Aorta (tissue), 5 donors: ENCODE measurements at regions of chr18 and their contacts with region 1.

Region 1: GRCh38 chr18:55322178-55322735 is 265.7 kb downstream of the TCF4 start:
- DNase-seq: peak; percentile 91 to 92
- ATAC-seq: peak; percentile 89
- H3K4me3 ChIP-seq: peak overlapping the region; percentile 96 to 99
- H3K27ac ChIP-seq: peak overlapping the region; percentile 32 to 94
- H3K4me1 ChIP-seq: no peaks in the 10 kb centered on the region
- H3K27me3 ChIP-seq: no peaks in the 10 kb centered on the region

Region 2: GRCh38 chr18:55087998-55088401 is 234.3 kb before region 1 on chr18:
- intact Hi-C with region 1: no loop called
- DNase-seq: no peak
- ATAC-seq: no peak
- H3K4me3 ChIP-seq: no peak overlapping the region
- H3K27ac ChIP-seq: no peak overlapping the region
- H3K4me1 ChIP-seq: no peaks in the 10 kb centered on the region
- H3K27me3 ChIP-seq: peaks cover 0 to 2% of the 10 kb centered on the region in 2 donors

Region 3: DNA sequence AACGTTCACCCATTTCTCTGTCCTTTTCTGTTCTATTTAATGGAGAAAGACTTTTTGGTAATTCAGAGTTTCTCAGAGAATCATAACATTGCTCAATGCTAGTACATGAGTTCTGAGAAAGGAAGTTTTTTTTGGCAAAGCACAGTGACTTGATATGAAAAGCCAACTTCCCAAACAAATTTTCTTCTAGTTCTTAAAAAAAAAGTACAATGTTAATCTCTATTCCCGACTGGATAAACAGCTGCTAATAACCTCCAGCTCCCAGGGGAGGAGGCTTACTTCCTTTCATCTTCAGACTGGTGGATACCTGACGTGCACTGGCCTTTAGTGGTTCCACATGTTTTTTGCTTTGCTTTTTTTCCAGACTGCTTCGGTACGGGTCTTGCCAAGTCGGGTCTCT is 78.4 kb before region 1 on chr18:
- intact Hi-C with region 1: loop called (anchors 2 to 5 kb)
- DNase-seq: no peak
- ATAC-seq: peak; percentile 82
- H3K4me3 ChIP-seq: peak overlapping the region in 1 of 2 donors; percentile 3
- H3K27ac ChIP-seq: peak overlapping the region; percentile 94 to 95
- H3K4me1 ChIP-seq: peaks cover 3% of the 10 kb centered on the region in 2 donors
- H3K27me3 ChIP-seq: no peaks in the 10 kb centered on the region

Region 4: DNA sequence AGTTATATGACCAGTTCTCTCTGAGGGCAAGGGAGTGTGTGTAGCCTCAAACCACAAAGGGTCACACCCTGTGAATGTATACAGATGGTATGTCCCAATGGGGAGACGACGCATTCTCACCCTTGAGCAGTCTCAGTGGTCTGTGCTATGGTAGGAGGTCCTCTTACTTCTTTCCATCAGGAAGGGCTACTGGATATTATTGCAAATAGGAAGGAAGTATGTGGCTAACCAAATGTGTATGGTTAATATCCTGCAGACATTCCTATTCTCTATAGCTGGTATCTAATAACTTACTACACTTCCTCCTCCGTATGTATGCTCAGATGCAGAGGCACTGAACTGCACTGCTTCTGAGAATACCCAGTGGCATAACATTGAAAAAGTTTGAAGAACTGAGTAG is 56.3 kb before region 1 on chr18:
- intact Hi-C with region 1: loop called in 1 of 2 experiments (anchors 5 kb)
- DNase-seq: no peak
- ATAC-seq: no peak
- H3K4me3 ChIP-seq: no peak overlapping the region
- H3K27ac ChIP-seq: no peak overlapping the region
- H3K4me1 ChIP-seq: peaks cover 0 to 4% of the 10 kb centered on the region in 2 donors
- H3K27me3 ChIP-seq: no peaks in the 10 kb centered on the region

Region 5: DNA sequence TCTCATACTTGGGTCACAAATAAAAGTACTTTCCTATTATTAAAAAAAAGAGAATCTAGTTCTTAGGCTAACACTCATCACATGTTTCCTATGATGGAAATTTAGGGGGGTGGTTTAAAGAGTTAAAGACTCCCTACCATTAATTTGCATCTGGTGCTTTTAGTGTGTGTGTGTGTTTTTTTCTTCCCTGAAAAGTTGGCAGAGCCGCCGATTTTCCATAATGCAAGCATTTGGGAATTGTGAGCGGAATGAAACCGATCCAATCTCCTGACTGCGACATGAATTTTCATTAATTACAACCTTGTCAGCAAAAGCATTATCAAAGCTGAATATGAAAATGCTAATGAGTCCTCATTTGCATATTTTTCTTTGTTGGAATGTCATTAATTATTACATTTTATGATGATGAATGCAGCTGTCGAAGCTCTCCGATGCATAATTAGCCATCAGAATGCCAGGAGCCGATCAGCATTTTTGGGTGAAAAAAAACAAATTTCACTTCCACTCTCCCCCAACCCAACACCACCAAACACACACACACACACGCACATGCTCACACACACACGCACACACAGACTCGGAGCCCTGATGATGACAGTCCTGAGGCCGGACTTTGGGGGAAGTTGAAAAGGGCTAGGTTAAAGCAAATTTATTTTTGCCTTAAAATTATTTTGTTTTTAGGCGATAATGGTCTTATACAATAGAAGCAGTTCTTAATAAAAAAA is 100.4 kb after region 1 on chr18:
- intact Hi-C with region 1: loop called in 1 of 2 experiments (anchors 5 kb)
- DNase-seq: peak in 1 of 2 donors; percentile 63
- ATAC-seq: peak; percentile 82
- H3K4me3 ChIP-seq: peak overlapping the region; percentile 48 to 87
- H3K27ac ChIP-seq: no peak overlapping the region
- H3K4me1 ChIP-seq: no peaks in the 10 kb centered on the region
- H3K27me3 ChIP-seq: no peaks in the 10 kb centered on the region

Region 6: DNA sequence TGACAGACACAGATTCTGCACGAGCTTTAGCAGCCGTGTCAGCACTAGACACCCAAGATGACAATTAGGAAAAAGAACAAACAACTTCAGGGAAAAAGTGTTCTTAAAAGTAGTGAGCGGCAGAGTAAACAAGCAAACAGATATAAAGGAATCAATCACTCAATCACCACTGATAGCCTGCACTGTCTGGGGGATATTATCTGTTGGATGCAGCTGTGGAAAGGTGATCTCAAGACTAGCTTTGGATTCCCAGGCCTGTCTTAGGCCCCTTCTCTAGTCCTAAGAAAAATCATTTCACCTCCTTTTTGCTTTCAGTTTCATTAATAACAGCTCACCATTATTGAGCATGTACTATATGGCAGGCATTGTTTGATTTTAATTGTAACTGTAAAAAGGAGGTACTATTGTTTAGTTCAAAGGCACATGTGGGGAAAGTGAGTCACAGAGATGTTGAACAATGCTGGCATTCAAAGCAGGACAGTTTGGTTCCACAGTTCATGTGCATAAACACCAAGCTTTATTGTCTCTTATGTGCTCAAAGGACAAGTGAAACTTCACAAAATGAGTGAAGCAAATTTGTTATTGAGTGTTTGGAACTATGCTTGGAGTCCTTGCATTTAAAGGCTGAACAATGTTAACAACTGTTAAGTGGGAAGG is 413.1 kb after region 1 on chr18:
- intact Hi-C with region 1: no loop called
- DNase-seq: no peak
- ATAC-seq: no peak
- H3K4me3 ChIP-seq: no peak overlapping the region
- H3K27ac ChIP-seq: no peak overlapping the region
- H3K4me1 ChIP-seq: no peaks in the 10 kb centered on the region
- H3K27me3 ChIP-seq: no peaks in the 10 kb centered on the region

Region 7: DNA sequence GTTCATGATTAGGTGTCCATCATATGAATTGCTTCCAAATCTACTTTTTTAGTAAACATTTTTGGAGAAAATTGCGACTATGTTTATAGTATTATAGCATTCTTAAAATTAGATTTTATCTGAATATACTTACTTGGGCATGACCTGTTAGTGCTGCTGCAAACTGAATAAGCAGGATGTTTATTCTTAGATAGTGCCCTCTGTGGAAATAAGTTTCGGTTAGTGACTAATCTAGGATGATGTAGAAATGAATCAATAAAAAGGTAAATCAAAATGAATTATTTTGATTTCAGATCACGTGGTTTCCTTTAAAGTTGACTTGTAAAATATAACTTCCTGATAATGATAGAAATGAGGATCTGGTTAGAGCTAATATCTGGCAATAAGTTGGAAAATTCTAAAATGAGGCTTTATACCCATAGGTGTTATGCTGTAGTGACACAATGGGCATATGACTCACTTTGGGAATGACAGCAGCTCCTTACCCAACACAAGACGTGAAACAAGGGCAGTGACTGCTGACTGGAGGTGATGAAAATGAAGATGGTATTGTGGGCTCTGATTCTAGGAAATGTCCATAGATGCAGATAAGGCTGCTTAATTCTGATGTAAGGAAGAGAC is 431.5 kb after region 1 on chr18:
- intact Hi-C with region 1: no loop called
- DNase-seq: no peak
- ATAC-seq: no peak
- H3K4me3 ChIP-seq: no peak overlapping the region
- H3K27ac ChIP-seq: no peak overlapping the region
- H3K4me1 ChIP-seq: no peaks in the 10 kb centered on the region
- H3K27me3 ChIP-seq: no peaks in the 10 kb centered on the region